CD14-positive monocyte (primary cell): ENCODE measurements at regions of chr19 and their contacts with region 1.

Region 1: DNA sequence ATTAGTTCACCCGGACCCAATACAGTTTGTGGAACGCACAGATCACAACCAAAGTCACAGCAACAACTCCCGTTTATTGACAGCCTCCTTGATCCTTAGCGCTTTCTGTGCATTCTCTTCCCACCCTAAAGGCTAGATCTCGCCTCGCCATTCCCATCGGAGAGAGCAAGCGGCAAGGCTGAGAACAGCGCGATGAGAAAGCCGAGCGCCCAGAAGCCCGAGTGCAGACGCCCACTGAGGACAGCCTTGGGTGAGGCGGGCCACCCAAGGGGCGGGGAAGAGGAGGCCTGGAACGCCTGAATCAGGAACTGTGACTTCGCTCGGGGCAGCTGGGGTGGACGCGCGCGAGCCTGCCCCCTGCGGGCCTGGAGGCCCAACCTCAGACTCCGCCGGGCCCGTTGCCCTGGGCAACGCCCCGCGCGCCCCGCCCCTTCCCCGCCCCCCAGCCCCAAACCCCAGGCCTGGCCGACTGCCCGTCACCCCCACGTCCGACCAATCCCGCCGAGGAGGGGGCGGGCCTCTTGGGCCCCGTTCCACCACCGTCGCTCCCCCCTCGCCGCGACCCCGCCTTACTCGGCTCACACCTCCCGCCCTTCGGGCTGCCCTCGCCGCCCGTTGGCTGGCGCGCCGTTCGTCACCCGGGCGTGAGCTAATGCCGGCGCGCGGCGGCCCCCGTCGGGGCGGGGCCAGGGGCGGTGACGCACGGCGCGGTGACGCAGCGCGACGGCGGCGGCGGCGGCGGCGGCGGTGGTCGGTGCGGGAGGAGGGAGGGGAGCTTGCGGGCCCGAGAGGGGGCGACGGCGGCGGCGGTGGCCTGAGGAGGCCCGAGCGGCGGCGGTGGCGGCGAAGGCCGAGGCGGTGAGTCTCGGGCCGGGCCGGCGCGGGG is at the start of gene SAMD4B:
- DNase-seq: peak; percentile 98 to 99 (median 99)
- H3K4me3 ChIP-seq: peak within 1 kb of the TSS; percentile 89 to 96 (median 91)
- H3K4me3 Mint-ChIP-seq: peak within 1 kb of the TSS; percentile 97
- H3K27ac ChIP-seq: peak within 1 kb of the TSS; percentile 86 to 89
- H3K27ac Mint-ChIP-seq: peak within 1 kb of the TSS; percentile 92 to 99 (median 95)
- H3K4me1 ChIP-seq: peaks cover 44 to 54% of the 10 kb centered on the region in 2 donors
- H3K4me1 Mint-ChIP-seq: peaks cover 61% of the 10 kb centered on the region
- H3K27me3 ChIP-seq: no peaks in the 10 kb centered on the region
- H3K27me3 Mint-ChIP-seq: peaks cover 0 to 4% (median 3%) of the 10 kb centered on the region in 3 donors
- CTCF ChIP-seq: peak; percentile 85
- polyA plus RNA-seq, gene SAMD4B: 4.5 to 56.6 (median 5.6) TPM

Region 2: DNA sequence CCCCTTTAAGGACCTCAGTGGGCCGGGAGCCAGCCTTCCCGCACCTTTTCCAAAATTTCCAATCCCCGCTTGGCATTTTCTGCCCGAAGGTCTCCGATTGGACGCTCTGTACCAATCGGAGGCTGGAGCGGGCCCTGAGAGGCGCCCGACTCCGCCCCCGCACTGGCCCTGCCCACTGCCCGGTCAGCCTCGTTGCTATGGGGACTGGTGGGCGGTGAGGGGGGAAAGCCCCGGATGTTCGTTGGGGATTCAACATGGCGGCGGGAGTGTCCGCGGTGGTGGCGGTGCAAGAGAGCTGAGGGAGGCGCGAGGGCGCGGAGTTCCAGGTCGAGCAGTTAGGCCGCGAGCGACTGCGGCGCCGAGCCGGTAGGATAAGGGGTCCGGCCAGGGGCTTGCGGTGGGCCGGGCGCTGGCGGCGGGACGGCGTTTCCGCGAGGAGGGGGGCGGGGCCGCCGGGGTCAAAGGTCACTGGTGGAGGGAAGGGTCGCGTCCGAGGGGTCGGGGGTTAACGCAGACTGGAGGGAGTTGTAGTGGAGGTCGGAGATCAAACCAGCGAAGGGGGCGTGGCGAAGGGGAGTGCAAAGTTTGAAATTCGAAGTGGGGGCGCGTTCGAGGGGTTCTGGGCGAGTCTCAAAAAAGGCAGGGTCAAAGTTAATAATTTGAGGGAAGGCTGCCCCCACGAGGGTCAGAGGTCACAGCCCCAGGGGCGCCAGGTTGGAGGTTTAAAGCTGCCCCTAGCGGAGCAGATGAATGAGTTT is 216.2 kb before region 1 on chr19 and contains the start of gene PAK4:
- intact Hi-C with region 1: loop called in 1 of 2 experiments (anchors 5 kb)
- DNase-seq: peak; percentile 94 to 97 (median 96)
- H3K4me3 ChIP-seq: peak within 1 kb of the TSS; percentile 64 to 94 (median 87)
- H3K4me3 Mint-ChIP-seq: peak within 1 kb of the TSS; percentile 95 to 98
- H3K27ac ChIP-seq: peak within 1 kb of the TSS; percentile 44 to 62
- H3K27ac Mint-ChIP-seq: peak within 1 kb of the TSS; percentile 87 to 96 (median 95)
- H3K4me1 ChIP-seq: peaks cover 12 to 13% of the 10 kb centered on the region in 2 donors
- H3K4me1 Mint-ChIP-seq: peaks cover 29% of the 10 kb centered on the region
- H3K27me3 ChIP-seq: peaks cover 0 to 4% of the 10 kb centered on the region in 2 donors
- H3K27me3 Mint-ChIP-seq: peaks cover 0 to 5% (median 5%) of the 10 kb centered on the region in 3 donors
- CTCF ChIP-seq: no peak
- polyA plus RNA-seq, gene PAK4: 1.3 to 11.3 (median 1.5) TPM

Region 3: GRCh38 chr19:39390755-39391592 is 49.0 kb after region 1 on chr19 and contains the starts of genes MED29 and PAF1:
- intact Hi-C with region 1: loop called in 1 of 2 experiments (anchors 5 kb)
- DNase-seq: peak; percentile 99 to 100 (median 99)
- H3K4me3 ChIP-seq: peak within 1 kb of the TSS; percentile 77 to 97 (median 79)
- H3K4me3 Mint-ChIP-seq: peak within 1 kb of the TSS; percentile 89 to 96
- H3K27ac ChIP-seq: peak within 1 kb of the TSS; percentile 85 to 91
- H3K27ac Mint-ChIP-seq: peak within 1 kb of the TSS; percentile 97 to 99 (median 98)
- H3K4me1 ChIP-seq: peaks cover 21 to 22% of the 10 kb centered on the region in 2 donors
- H3K4me1 Mint-ChIP-seq: peaks cover 19% of the 10 kb centered on the region
- H3K27me3 ChIP-seq: no peaks in the 10 kb centered on the region
- H3K27me3 Mint-ChIP-seq: peaks cover 0 to 3% (median 0%) of the 10 kb centered on the region in 3 donors
- CTCF ChIP-seq: no peak
- polyA plus RNA-seq, gene MED29: 35.8 to 38.2 (median 37.0) TPM
- polyA plus RNA-seq, gene PAF1: 22.7 to 37.8 (median 25.2) TPM

Region 4: GRCh38 chr19:39406656-39407393 is 64.9 kb after region 1 on chr19 and contains the start of gene ZFP36:
- intact Hi-C with region 1: loop called in 1 of 2 experiments (anchors 2 kb)
- DNase-seq: peak; percentile 85 to 98 (median 90)
- H3K4me3 ChIP-seq: peak within 1 kb of the TSS; percentile 89 to 96 (median 91)
- H3K4me3 Mint-ChIP-seq: peak within 1 kb of the TSS; percentile 99 to 100
- H3K27ac ChIP-seq: peak within 1 kb of the TSS; percentile 98 to 99
- H3K27ac Mint-ChIP-seq: peak within 1 kb of the TSS; percentile 98 to 100 (median 100)
- H3K4me1 ChIP-seq: peaks cover 49 to 50% of the 10 kb centered on the region in 2 donors
- H3K4me1 Mint-ChIP-seq: peaks cover 39% of the 10 kb centered on the region
- H3K27me3 ChIP-seq: no peaks in the 10 kb centered on the region
- H3K27me3 Mint-ChIP-seq: peaks cover 0 to 28% (median 5%) of the 10 kb centered on the region in 3 donors
- CTCF ChIP-seq: no peak
- polyA plus RNA-seq, gene ZFP36: 473 to 2,084 (median 632) TPM

Region 5: DNA sequence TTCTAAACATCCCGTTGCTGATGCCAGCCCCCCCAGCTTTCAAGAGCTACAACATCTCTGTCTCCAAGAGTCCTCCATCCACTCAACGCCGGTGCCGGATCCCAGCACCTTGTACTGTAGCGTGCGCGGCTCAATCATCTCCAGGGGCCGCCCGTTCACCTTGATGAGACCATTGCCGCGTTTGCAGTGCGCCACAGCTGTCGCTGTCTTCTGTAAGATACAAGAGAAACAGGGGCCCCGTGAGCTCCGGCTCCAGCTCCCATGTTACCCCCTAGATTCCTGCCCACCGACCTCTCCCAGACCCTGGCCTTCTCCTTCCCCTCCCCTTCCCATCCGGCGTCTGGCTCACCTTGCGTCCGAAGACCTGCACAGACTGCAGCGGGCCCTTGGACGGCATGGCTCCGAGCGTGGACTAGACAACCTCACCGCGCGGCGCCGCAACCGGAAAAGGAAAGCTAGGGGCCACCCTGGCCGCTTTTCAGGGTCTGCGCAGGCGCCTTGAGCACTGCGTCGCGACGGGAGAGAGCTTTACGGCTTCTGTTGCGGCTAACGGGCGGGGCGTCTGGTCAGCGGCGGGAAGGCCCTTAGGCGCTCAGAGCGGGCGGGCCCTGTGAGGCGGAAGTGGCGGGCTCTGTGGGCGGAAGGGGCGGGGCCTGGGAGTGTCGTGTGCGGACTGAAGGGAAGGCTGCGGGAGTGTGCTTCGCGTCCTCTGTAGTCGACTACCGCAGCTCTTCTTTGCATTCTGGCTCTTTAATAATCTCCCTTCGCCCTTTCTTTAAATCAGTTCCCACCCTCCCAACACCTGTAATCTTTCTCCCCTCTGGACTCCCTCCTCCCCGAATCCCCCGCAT is 93.8 kb after region 1 on chr19 and contains the start of gene RPS16:
- intact Hi-C with region 1: loop called in 1 of 2 experiments (anchors 5 kb)
- DNase-seq: peak; percentile 98 to 99 (median 98)
- H3K4me3 ChIP-seq: peak within 1 kb of the TSS; percentile 54 to 96 (median 95)
- H3K4me3 Mint-ChIP-seq: peak within 1 kb of the TSS; percentile 99
- H3K27ac ChIP-seq: peak within 1 kb of the TSS; percentile 82 to 89
- H3K27ac Mint-ChIP-seq: peak within 1 kb of the TSS; percentile 94 to 99 (median 97)
- H3K4me1 ChIP-seq: peaks cover 32 to 38% of the 10 kb centered on the region in 2 donors
- H3K4me1 Mint-ChIP-seq: peaks cover 40% of the 10 kb centered on the region
- H3K27me3 ChIP-seq: peaks cover 0 to 2% of the 10 kb centered on the region in 2 donors
- H3K27me3 Mint-ChIP-seq: peaks cover 6 to 12% (median 9%) of the 10 kb centered on the region in 3 donors
- CTCF ChIP-seq: no peak
- polyA plus RNA-seq, gene RPS16: 689 to 2,619 (median 1,038) TPM

Region 6: DNA sequence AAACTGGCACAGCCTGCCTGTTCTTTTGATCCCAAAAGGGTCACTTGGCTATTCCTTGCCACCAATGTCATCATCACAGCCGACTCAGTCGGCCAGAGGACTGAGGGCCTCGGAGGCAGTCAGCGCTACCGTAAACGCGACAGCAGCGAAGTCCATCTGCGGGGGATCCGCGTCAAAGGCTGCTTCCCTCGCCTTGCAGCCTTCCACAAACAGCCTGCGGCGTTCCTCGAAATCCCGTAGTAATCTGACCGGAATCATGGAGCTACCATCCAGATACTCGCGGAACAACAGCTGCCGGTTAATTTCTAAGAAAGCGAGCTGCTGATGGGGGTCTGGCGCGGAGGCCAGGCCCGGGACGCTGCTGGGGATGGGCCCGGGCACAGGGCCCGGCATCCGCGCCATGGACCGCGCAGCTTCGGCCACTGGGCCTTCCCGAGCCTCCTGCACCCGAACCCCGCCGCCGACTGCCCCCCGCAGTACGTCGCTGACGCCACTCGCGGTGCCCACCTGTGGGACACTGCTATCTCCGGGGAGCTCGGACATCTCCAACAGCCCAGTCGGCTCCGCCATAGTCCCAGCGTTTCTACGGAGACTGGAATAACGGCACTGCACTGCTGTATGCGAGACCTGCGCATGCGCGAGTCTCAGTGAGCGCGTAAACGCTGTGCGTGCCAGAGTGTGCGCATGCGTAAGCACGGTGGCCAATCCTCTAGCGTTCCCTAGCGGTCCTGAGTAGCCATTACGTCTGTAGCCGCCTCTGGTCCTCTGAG is 190.5 kb after region 1 on chr19 and contains the start of gene EID2B:
- intact Hi-C with region 1: loop called in 1 of 2 experiments (anchors 5 kb)
- DNase-seq: peak; percentile 96 to 99 (median 96)
- H3K4me3 ChIP-seq: peak within 1 kb of the TSS; percentile 68 to 92 (median 77)
- H3K4me3 Mint-ChIP-seq: peak within 1 kb of the TSS; percentile 93 to 95
- H3K27ac ChIP-seq: peak within 1 kb of the TSS; percentile 41 to 84
- H3K27ac Mint-ChIP-seq: peak within 1 kb of the TSS; percentile 76 to 92 (median 88)
- H3K4me1 ChIP-seq: peaks cover 8 to 11% of the 10 kb centered on the region in 2 donors
- H3K4me1 Mint-ChIP-seq: peaks cover 11% of the 10 kb centered on the region
- H3K27me3 ChIP-seq: no peaks in the 10 kb centered on the region
- H3K27me3 Mint-ChIP-seq: peaks cover 0 to 2% (median 0%) of the 10 kb centered on the region in 3 donors
- CTCF ChIP-seq: peak; percentile 98
- polyA plus RNA-seq, gene EID2B: 1.2 to 2.6 (median 2.4) TPM

Region 7: GRCh38 chr19:39833464-39834286 is 491.7 kb after region 1 on chr19 and contains the start of gene DYRK1B:
- intact Hi-C with region 1: loop called in 1 of 2 experiments (anchors 10 kb)
- DNase-seq: peak; percentile 96 to 98 (median 98)
- H3K4me3 ChIP-seq: peak within 1 kb of the TSS; percentile 79 to 100 (median 95)
- H3K4me3 Mint-ChIP-seq: peak within 1 kb of the TSS; percentile 85 to 89
- H3K27ac ChIP-seq: peak within 1 kb of the TSS; percentile 78 to 81
- H3K27ac Mint-ChIP-seq: peak within 1 kb of the TSS; percentile 85 to 95 (median 93)
- H3K4me1 ChIP-seq: peaks cover 27 to 34% of the 10 kb centered on the region in 2 donors
- H3K4me1 Mint-ChIP-seq: peaks cover 32% of the 10 kb centered on the region
- H3K27me3 ChIP-seq: no peaks in the 10 kb centered on the region
- H3K27me3 Mint-ChIP-seq: peaks cover 0 to 1% (median 0%) of the 10 kb centered on the region in 3 donors
- CTCF ChIP-seq: no peak
- polyA plus RNA-seq, gene DYRK1B: 4.2 to 13.6 (median 6.5) TPM